Right ventricle myocardium inferior (tissue), 1 donor: ENCODE measurements at regions of chr16 and their contacts with region 1.

Region 1: GRCh38 chr16:14486520-14487303 is 143.3 kb downstream of the PARN start:
- DNase-seq: peak; percentile 78
- ATAC-seq: peak; percentile 84

Region 2: DNA sequence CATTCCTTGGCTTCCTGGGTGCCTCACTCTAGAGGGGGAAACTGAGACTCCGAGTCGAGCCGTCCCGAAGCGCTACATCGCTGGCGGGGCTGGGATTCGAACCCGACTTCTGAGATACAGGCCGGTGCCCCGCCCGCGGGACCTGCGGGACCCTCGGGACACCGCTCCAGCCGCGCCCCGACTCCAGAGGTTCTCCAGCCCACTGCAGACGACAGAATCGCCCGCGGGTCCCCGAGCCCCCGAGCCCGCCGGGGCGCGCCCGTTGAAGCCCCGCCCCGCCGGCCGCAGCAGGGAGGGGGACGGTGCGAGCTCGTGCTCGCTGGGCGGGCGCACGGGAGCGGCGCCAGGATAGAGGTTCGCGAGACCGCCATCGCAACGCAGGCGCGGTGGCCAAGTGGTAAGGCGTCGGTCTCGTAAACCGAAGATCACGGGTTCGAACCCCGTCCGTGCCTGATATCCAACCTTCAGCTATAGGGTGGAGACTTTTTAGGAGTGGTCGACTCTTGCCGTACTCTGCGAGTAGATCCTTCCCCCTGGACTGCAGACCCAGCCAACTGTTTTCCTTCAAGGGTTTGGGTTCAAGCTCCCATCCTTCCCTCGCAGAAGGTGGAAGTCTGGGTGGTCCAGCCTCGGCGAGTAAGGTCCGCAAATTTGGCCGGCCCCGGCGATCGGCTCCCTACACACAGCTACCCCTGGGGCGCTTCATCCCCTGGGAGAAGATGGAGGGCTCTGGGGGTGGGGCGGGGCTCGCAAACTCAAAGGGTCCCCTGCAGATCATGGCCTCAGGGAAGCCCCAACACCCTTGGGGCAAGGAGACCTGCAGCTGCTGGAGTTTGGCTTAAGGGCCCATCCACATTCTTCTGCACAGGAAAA is 201.0 kb before region 1 on chr16:
- intact Hi-C with region 1: no loop called
- DNase-seq: peak; percentile 94
- ATAC-seq: peak; percentile 93

Region 3: DNA sequence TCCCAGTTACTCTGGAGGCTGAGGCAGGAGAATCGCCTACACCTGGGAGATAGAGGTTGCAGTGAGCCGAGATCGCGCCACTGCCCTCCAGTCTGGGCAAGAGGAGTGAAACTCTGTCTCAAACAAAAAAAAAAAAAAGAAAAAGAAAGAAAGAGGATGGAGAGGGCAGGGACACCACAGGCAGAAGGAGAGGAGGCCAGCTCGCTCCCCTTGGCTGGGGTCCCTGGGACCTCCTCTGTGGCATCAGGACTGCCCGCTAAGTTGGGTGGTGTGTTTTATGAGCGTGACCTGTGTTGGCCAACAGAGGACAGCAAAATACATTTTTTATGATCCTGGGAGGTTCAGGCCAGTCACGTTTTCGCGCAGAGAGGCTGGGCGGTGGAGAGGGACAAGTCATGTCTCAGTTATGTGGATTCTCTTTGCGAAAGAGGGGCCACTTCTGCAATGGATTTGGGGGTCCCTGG is 186.0 kb before region 1 on chr16:
- intact Hi-C with region 1: loop called (anchors 2 kb)
- DNase-seq: peak; percentile 79
- ATAC-seq: peak; percentile 82

Region 4: GRCh38 chr16:14324581-14324980 is 162.1 kb before region 1 on chr16:
- intact Hi-C with region 1: loop called (anchors 5 kb)
- DNase-seq: no peak
- ATAC-seq: no peak

Region 5: GRCh38 chr16:14418795-14419225 is 67.9 kb before region 1 on chr16:
- intact Hi-C with region 1: loop called (anchors 5 kb)
- DNase-seq: no peak
- ATAC-seq: peak; percentile 88

Region 6: GRCh38 chr16:14454391-14454790 is 32.3 kb before region 1 on chr16:
- intact Hi-C with region 1: loop called (anchors 5 kb)
- DNase-seq: no peak
- ATAC-seq: no peak